Activated CD8-positive, alpha-beta T cell treated with anti-CD3 and anti-CD28 coated beads, Interleukin-2, amount 10 ng/mL, durations not matched to agents 7 days and 5 days (primary cell): ENCODE measurements at regions of chr7 and their contacts with region 1.

Region 1: GRCh38 chr7:6106140-6106904 is 75.1 kb downstream of the ANKRD61 start:
- DNase-seq: peak; percentile 55
- ATAC-seq: peak; percentile 13
- H3K4me3 Mint-ChIP-seq: peak overlapping the region; percentile 96
- H3K27ac Mint-ChIP-seq: peak overlapping the region; percentile 92
- H3K4me1 Mint-ChIP-seq: peaks cover 32% of the 10 kb centered on the region
- H3K27me3 Mint-ChIP-seq: no peaks in the 10 kb centered on the region

Region 2: DNA sequence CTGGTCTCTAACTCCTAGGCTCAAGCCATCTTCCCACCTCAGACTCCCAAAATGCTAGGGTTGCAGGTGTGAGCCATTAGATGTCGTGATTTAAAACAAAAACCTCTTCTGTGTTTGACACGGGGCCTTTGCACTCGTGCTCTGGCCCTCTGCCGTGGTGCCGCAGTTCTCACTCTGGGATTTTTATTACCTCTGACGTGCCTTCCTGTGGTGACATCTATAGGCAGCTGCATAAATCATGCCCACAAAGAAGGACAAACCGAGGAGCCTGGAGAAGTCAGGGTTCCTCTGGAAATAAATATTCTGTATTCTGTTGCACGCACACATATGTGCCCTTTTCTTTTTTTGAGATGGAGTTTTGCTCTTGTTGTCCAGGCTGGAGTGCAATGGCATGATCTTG is 251.6 kb before region 1 on chr7:
- CTCF ChIA-PET with region 1: interaction called, 13 read pairs
- POLR2A ChIA-PET with region 1: no interaction called
- DNase-seq: no peak
- ATAC-seq: no peak
- H3K4me3 Mint-ChIP-seq: no peak overlapping the region
- H3K27ac Mint-ChIP-seq: no peak overlapping the region
- H3K4me1 Mint-ChIP-seq: peaks cover 21% of the 10 kb centered on the region
- H3K27me3 Mint-ChIP-seq: no peaks in the 10 kb centered on the region

Region 3: DNA sequence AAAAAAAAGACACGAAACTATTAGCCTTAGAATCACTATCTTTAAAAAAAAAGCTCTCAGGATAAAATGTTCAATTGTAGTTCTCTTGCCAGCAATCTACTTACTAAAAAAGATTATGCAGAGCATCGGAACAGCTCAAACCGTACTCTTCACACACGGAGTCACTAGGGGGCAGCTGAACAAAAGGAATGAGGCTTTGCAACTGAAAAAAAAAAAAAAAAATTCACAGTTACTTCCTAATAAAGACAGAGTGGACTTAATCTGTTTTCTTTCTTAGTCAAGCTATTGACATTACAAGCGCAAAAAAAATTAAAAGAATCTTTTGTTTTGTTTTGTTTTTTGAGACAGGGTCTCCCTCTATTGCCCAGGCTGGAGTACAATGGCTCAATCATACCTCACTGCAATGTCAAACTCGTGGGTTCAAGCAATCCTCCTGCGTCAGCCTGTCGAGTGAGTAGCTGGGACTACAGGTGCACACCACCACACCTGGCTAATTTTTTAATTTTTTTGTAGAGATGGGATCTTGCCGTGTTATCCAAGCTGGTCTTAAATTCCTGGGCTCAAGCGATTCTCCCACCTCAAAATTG is 109.0 kb before region 1 on chr7:
- CTCF ChIA-PET with region 1: interaction called, 18 read pairs
- POLR2A ChIA-PET with region 1: no interaction called
- DNase-seq: peak; percentile 62
- ATAC-seq: peak; percentile 65
- H3K4me3 Mint-ChIP-seq: no peak overlapping the region
- H3K27ac Mint-ChIP-seq: no peak overlapping the region
- H3K4me1 Mint-ChIP-seq: no peaks in the 10 kb centered on the region
- H3K27me3 Mint-ChIP-seq: no peaks in the 10 kb centered on the region

Region 4: GRCh38 chr7:6008668-6009611 is 97.4 kb before region 1 on chr7 and contains the starts of genes AIMP2 and PMS2:
- CTCF ChIA-PET with region 1: interaction called, 14 read pairs
- POLR2A ChIA-PET with region 1: interaction called, 8 read pairs
- DNase-seq: peak; percentile 99
- ATAC-seq: peak; percentile 92
- H3K4me3 Mint-ChIP-seq: peak within 1 kb of the TSS; percentile 89
- H3K27ac Mint-ChIP-seq: peak within 1 kb of the TSS; percentile 95
- H3K4me1 Mint-ChIP-seq: peaks cover 38% of the 10 kb centered on the region
- H3K27me3 Mint-ChIP-seq: no peaks in the 10 kb centered on the region
- total RNA-seq, gene AIMP2: 39.3 to 41.7 TPM
- total RNA-seq, gene PMS2: 19.4 to 21.1 TPM

Region 5: GRCh38 chr7:6026011-6026819 is 80.1 kb before region 1 on chr7:
- CTCF ChIA-PET with region 1: interaction called, 18 read pairs
- POLR2A ChIA-PET with region 1: no interaction called
- DNase-seq: peak; percentile 86
- ATAC-seq: peak; percentile 99
- H3K4me3 Mint-ChIP-seq: peak overlapping the region; percentile 68
- H3K27ac Mint-ChIP-seq: peak overlapping the region; percentile 89
- H3K4me1 Mint-ChIP-seq: peaks cover 25% of the 10 kb centered on the region
- H3K27me3 Mint-ChIP-seq: no peaks in the 10 kb centered on the region

Region 6: DNA sequence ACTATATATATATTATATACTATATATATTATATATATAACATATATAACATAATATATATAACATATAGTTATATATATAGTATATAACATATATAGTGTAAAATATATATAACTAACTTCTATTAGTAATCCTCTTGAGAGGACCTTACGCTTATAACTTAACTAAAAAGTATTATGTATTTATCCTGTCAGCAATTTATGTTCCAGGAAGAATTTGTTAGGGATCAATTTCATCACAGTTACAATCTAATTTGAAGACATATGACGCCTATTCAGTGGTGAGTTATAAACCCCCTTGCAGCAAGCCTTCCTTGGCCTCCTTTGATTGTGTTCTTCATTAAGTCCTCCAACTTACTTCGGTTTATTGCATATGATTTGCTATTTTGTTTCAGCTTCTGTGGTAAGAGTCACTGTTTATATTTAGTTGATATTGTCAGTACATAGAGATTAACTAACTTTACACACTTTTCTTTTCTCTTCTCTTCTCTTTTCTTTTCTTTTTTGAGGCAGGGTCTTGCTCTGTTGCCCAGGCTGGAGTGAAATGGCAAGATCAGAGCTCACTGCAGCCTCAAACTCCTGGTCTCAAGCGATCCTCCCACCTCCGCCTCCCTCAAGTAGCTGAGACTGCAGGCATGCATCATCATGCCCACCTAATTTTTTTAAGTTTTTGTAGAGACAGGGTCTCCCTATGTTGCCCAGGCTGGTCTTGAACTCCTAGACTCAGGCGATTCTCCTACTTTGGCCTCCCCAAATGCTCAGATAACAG is 15.4 kb before region 1 on chr7:
- CTCF ChIA-PET with region 1: no interaction called
- POLR2A ChIA-PET with region 1: no interaction called
- DNase-seq: no peak
- ATAC-seq: no peak
- H3K4me3 Mint-ChIP-seq: no peak overlapping the region
- H3K27ac Mint-ChIP-seq: no peak overlapping the region
- H3K4me1 Mint-ChIP-seq: peaks cover 2% of the 10 kb centered on the region
- H3K27me3 Mint-ChIP-seq: peaks cover 6% of the 10 kb centered on the region